ENCODE measurements at regions of chr20 and their contacts with region 1.

Region 1: GRCh38 chr20:34282041-34282440 is 21.1 kb downstream of the AHCY start:
- DNase-seq: no peak
- H3K4me3 ChIP-seq: no peak overlapping the region
- H3K27me3 ChIP-seq: no peaks in the 10 kb centered on the region
- CTCF ChIP-seq: no peak

Region 2: GRCh38 chr20:34091637-34092200 is 190.3 kb before region 1 on chr20:
- CTCF ChIA-PET with region 1: no interaction called
- POLR2A ChIA-PET with region 1: interaction called, 36 read pairs
- DNase-seq: no peak
- H3K4me3 ChIP-seq: no peak overlapping the region
- H3K27me3 ChIP-seq: no peaks in the 10 kb centered on the region
- CTCF ChIP-seq: no peak

Region 3: GRCh38 chr20:34129518-34130162 is 152.4 kb before region 1 on chr20:
- CTCF ChIA-PET with region 1: no interaction called
- POLR2A ChIA-PET with region 1: no interaction called
- DNase-seq: no peak
- H3K4me3 ChIP-seq: no peak overlapping the region
- H3K27me3 ChIP-seq: no peaks in the 10 kb centered on the region
- CTCF ChIP-seq: peak; percentile 80